Brain microvascular endothelial cell (primary cell): ENCODE measurements at regions of chr3 and their contacts with region 1.

Region 1: DNA sequence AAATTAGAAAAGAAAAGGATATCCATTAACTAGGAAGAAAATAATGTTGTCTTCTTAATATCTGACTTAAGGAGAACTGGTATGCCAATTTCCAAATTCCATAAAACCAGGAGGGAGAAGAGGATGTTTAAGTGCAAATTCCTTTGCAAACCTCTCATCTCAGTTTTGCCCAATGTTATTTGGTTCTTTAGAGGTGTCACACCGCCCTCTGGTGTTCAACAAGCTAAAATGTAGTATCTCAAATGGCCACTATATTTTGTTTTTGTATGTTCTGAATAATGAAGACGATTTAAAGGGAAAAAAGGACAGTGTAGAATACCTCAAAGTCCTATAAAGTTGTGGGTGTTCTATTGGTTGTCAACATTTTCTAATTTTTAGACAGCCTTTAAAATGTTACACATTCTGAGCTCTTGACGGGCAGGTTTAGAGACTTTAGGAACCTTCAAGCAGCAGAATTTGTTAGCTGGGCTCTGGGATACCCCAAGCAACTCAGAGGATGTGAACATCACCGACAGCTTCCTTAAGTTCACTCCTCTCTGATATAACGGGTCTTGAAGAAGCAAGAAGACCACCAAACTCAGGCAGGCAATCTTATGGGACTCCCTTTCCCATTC is 458.3 kb downstream of the MFSD1 start:
- DNase-seq: peak; percentile 63
- H3K4me3 ChIP-seq: no peak overlapping the region
- H3K27ac ChIP-seq: no peak overlapping the region
- H3K27me3 ChIP-seq: no peaks in the 10 kb centered on the region
- CTCF ChIP-seq: peak; percentile 61

Region 2: GRCh38 chr3:158845765-158846350 is 414.3 kb before region 1 on chr3:
- in situ Hi-C with region 1: loop called (anchors 25 kb)
- DNase-seq: no peak
- H3K4me3 ChIP-seq: no peak overlapping the region
- H3K27ac ChIP-seq: no peak overlapping the region
- H3K27me3 ChIP-seq: no peaks in the 10 kb centered on the region
- CTCF ChIP-seq: peak; percentile 72

Region 3: GRCh38 chr3:159458010-159458409 is 197.9 kb after region 1 on chr3:
- in situ Hi-C with region 1: no loop called
- DNase-seq: peak; percentile 98
- H3K4me3 ChIP-seq: no peak overlapping the region
- H3K27ac ChIP-seq: peak overlapping the region; percentile 56
- H3K27me3 ChIP-seq: no peaks in the 10 kb centered on the region
- CTCF ChIP-seq: no peak